BJ (cell line): ENCODE measurements at regions of chr15 and their contacts with region 1.

Region 1: DNA sequence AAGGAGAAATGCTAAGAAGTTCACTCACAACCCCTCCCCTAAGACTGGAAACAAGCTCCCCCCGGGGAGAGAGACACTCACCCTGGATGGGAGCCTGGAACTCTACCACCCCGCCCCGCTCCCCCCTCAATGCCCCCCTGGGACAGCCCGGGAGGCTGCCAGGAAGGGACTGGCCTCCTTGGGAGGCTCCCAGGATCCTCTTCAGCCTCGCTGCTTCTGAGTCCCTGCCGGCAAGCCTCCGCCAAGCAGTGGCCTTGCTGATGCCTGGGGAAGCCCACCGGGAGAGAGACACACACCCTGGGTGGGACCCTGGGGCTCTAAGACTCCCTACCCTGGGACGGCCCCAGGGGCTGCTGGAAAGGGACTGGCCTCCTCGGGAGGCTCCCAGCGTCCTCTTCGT is 33.4 kb downstream of the CPEB1 start:
- DNase-seq: no peak
- H3K4me3 ChIP-seq: no peak overlapping the region
- H3K27me3 ChIP-seq: no peaks in the 10 kb centered on the region
- CTCF ChIP-seq: no peak

Region 2: DNA sequence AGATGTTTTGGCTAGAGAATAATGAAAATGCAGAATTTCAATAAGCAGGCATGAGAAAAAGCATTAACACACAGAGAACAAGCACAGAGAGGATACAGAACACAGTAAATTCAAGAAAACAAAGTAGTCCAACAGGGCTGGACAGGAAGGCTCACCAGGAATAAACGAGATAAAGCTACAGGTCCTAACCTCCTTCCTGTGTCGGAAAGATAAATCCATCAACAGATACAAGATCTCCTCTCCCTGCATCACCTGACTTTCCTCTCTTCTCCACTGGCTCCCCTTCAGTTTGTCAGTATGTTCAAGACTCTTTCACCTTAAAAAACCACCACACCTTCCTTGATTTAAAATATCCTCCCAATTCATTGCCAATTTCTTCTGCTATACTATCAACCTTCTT is 22.1 kb after region 1 on chr15:
- CTCF ChIA-PET with region 1: no interaction called
- POLR2A ChIA-PET with region 1: interaction called, 19 read pairs
- DNase-seq: no peak
- H3K4me3 ChIP-seq: no peak overlapping the region
- H3K27me3 ChIP-seq: peaks cover 2% of the 10 kb centered on the region; the same call in 1 of the 2 replicates
- CTCF ChIP-seq: no peak